ENCODE measurements at regions of chr19 and their contacts with region 1.

Region 1: GRCh38 chr19:47035127-47036096 is 13.0 kb downstream of the TMEM160 start:
- DNase-seq: peak; percentile 41 to 90
- H3K4me3 ChIP-seq: peak overlapping the region; percentile 42 to 72
- H3K27ac ChIP-seq: peak overlapping the region in 1 of 2 donors; percentile 27
- H3K4me1 ChIP-seq: peaks cover 4 to 11% of the 10 kb centered on the region in 2 donors
- H3K27me3 ChIP-seq: peaks cover 7% of the 10 kb centered on the region
- CTCF ChIP-seq: peak; percentile 94 to 97 (median 97)

Region 2: DNA sequence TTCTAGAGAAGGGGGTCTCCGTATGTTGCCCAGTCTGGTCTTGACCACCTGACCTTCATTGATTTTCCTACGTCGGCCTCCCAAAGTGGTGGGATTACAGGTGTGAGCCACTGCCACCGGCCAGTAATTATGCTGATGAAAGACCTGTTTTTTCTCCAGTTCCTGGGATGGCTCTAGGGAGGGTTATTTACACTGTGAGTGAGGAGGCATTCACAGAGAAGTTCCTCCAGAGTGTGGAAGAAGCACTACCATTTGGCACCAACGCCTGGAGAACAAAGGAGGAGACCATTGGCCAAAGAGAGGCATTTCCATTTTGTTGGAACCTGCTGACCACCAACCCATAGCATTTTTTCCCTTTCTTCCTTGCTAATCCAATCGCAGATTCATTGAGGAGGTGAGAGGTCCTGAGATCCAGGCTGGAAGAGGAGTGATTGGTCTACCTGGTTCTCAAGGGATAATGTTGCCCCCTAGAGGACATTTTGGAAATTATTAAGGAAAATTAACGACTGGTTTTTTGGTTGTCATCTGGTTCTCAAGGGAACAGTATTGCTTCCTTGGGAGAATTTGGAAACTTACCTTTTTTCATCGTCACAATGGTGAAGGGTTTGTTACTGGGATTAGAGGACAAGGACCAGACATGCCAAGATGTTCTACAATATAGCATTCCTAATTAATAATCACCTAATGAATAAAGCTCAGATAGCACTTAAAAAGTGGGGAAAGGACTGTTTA is 89.7 kb after region 1 on chr19:
- intact Hi-C with region 1: loop called (anchors 1 kb)
- DNase-seq: no peak
- H3K4me3 ChIP-seq: no peak overlapping the region
- H3K27ac ChIP-seq: no peak overlapping the region
- H3K4me1 ChIP-seq: peaks cover 0 to 8% of the 10 kb centered on the region in 2 donors
- H3K27me3 ChIP-seq: no peaks in the 10 kb centered on the region
- CTCF ChIP-seq: peak; percentile 69 to 79 (median 79)